ENCODE measurements at regions of chr10 and their contacts with region 1.

Region 1: DNA sequence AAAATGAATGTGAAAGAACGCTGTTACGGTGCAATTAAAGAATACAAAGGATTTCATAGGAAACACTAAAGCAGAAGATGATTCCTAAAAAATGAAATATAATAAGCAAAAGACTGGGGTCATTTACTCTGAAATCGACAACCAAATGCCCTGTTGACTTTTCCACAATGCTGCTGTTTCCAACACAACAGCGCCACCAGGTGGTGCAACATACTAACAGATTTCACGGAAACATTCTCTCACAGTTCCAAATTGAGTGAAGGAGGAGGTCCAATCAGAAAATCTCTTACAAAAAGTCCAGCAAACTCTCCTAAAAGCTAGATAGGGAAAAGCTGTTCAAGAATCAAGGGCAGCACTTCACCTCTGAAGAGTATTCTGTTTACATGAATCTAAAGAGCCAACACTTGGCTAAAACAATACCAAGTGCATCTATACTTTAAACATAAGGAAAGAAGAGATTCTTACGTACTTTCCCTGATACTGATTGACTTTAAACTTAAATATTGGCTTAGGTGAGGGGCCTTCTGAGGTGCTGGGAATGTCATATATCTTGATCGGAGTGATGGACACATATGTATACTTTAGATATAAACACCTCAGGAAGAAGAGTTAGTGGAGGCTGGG is 55.9 kb downstream of the UPF2 start:
- DNase-seq: peak; percentile 57 to 68
- ATAC-seq: peak in 6 of 8 donors; percentile 25 to 70 (median 66)
- H3K4me3 ChIP-seq: no peak overlapping the region
- H3K27ac ChIP-seq: no peak overlapping the region
- H3K4me1 ChIP-seq: peaks cover 0 to 9% (median 0%) of the 10 kb centered on the region in 9 donors
- H3K27me3 ChIP-seq: no peaks in the 10 kb centered on the region
- CTCF ChIP-seq: peak; percentile 67 to 93 (median 85)

Region 2: GRCh38 chr10:11525503-11525902 is 461.2 kb before region 1 on chr10:
- intact Hi-C with region 1: loop called in 1 of 10 experiments (anchors 10 kb)
- DNase-seq: peak; percentile 57 to 66
- ATAC-seq: peak in 7 of 8 donors; percentile 73 to 88 (median 77)
- H3K4me3 ChIP-seq: no peak overlapping the region
- H3K27ac ChIP-seq: peak overlapping the region in 7 of 10 donors; percentile 26 to 62 (median 45)
- H3K4me1 ChIP-seq: peaks cover 0 to 71% (median 37%) of the 10 kb centered on the region in 9 donors
- H3K27me3 ChIP-seq: no peaks in the 10 kb centered on the region
- CTCF ChIP-seq: no peak

Region 3: GRCh38 chr10:11782793-11783557 is 203.7 kb before region 1 on chr10:
- intact Hi-C with region 1: loop called in 8 of 10 experiments (anchors 2 to 5 kb)
- DNase-seq: no peak
- ATAC-seq: peak in 2 of 8 donors; percentile 44 to 47
- H3K4me3 ChIP-seq: no peak overlapping the region
- H3K27ac ChIP-seq: no peak overlapping the region
- H3K4me1 ChIP-seq: no peaks in the 10 kb centered on the region
- H3K27me3 ChIP-seq: peaks cover 0 to 13% (median 0%) of the 10 kb centered on the region in 7 donors
- CTCF ChIP-seq: peak; percentile 45 to 78 (median 68)

Region 4: DNA sequence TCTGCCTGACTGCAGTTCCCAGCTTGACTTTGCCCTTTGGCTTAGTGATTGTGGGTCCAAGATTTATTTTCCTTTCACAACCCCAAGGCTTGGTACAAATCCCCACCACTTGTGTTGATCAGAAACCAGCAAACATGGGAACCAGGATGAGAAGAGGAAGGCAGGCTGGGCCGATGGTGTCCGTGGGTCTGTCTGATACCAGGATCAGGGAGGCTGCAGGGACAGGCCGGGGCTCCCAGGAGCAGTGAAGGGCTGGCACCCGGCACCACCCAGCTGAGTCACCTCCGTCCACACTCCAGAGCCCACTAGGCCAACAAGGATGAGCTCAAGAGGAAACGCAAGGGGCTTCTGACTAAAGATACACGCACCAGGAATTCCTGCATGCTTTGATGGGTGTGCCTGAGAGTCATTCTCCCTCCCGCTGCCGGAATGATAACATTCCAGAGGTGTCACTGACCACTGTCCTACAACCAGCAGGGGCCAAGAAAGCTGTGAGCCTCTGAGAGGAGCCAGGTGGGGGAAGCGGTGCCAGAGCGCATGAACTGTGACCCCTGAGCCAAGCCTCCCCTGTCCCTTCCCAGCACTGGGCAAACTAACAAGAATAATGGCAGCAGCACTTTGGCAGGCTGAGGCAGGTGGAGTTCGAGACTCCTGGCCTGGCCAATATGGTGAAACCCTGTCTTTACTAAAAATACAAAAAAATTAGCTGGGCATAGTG is 192.8 kb before region 1 on chr10:
- intact Hi-C with region 1: loop called in 4 of 10 experiments (anchors 5 kb)
- DNase-seq: no peak
- ATAC-seq: peak in 1 of 8 donors; percentile 22
- H3K4me3 ChIP-seq: no peak overlapping the region
- H3K27ac ChIP-seq: no peak overlapping the region
- H3K4me1 ChIP-seq: peaks cover 0 to 5% (median 0%) of the 10 kb centered on the region in 9 donors
- H3K27me3 ChIP-seq: peaks cover 0 to 23% (median 10%) of the 10 kb centered on the region in 7 donors
- CTCF ChIP-seq: no peak

Region 5: DNA sequence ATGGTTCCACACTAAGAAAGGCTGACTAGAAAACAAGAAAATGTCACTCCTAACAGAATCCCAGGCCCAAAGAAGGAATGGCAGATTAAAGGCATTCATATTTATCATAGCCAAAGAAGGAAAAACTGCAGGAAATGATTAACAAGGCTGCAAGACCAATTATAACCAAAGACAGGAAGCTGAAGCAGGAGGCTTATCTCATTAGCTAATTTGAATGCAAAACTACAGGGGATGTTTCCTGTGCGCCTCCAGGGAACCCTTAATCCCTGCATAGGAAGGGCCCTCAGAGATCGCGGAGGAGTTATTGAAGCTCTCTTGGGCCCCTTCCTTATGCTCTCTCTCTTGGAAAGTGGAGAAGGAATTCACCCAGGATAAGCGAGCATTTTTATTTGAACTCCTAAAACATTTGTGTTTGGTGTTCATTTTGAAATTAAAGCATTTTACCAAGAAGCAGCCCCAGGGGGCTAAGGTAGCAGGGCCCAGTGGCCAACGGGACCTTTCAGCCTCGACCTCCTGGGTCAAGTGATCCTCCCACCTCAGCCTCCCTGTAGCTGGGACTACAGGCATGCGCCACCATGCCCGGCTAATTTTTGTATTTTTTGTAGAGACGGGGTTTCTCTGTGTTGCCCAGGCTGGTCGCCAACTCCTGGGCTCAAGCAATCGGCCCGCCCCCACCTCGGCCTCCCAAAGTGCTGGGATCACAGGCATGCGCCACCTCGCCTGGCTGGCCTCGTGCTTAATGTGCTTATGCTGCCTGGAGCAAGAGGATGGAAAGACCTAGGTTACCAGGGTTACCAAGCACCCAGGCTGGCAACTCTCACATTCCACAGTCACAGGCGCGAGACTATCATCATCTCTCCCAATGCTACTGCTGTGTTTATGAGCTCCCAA is 187.6 kb before region 1 on chr10:
- intact Hi-C with region 1: loop called in 4 of 10 experiments (anchors 5 kb)
- DNase-seq: no peak
- ATAC-seq: peak in 4 of 8 donors; percentile 17 to 75 (median 57)
- H3K4me3 ChIP-seq: no peak overlapping the region
- H3K27ac ChIP-seq: no peak overlapping the region
- H3K4me1 ChIP-seq: peaks cover 0 to 8% (median 0%) of the 10 kb centered on the region in 9 donors
- H3K27me3 ChIP-seq: peaks cover 0 to 18% (median 8%) of the 10 kb centered on the region in 7 donors
- CTCF ChIP-seq: no peak

Region 6: GRCh38 chr10:11810313-11810766 is 176.4 kb before region 1 on chr10:
- intact Hi-C with region 1: no loop called
- DNase-seq: no peak
- ATAC-seq: peak in 1 of 8 donors; percentile 25
- H3K4me3 ChIP-seq: no peak overlapping the region
- H3K27ac ChIP-seq: no peak overlapping the region
- H3K4me1 ChIP-seq: peaks cover 0 to 10% (median 0%) of the 10 kb centered on the region in 9 donors
- H3K27me3 ChIP-seq: peaks cover 0 to 23% (median 4%) of the 10 kb centered on the region in 7 donors
- CTCF ChIP-seq: no peak